SK-N-SH (cell line): ENCODE measurements at regions of chr13 and their contacts with region 1.

Region 1: DNA sequence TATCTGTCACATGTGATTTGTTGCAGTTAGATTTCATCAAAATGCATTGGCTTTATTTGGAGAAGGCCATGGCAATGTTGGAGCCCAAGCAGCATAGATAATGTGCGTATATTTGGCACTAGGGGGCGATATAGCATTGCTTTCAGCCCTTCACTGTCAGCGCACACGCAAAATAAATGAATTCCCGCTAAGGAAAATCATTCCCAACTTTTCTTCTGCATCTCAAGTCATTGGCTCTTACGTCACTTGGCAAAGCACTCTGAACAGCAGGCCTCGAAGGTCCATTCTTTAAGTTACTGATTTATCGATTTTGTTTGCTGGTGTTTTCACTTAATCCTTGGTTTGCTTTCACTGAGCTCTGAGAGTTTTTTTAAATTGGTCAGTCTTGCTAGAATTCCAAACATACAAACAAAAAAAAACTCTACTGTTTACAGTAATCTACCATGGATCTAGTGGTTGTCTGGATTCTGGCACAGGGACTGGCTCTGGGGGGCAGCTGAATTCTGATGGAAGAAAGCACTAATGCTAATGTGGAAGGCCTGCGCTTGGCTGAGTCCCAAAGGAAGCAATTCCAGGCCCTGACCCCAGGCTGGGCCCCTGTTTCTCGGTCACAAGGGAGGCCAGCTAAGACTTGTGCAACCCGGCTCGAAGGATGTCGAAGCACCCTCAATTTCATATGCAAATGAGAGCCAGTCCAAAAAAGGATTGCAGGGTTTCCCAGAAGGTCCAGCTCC is 97.7 kb upstream of the IPO5 start:
- DNase-seq: peak; percentile 62
- H3K4me3 ChIP-seq: no peak overlapping the region
- H3K27ac ChIP-seq: peak overlapping the region in 1 of 2 experiments; percentile 30; a peak in 1 of 4 replicates
- H3K4me1 ChIP-seq: peaks cover 3 to 17% of the 10 kb centered on the region in 2 experiments; a peak in 2 of 4 replicates
- H3K27me3 ChIP-seq: no peaks in the 10 kb centered on the region
- CTCF ChIP-seq: peak; percentile 92
- EP300 ChIP-seq: 0 out of 4 replicates have a peak, but pooled peaks of 1 of the 2 experiments have one; percentile 9
- RAD21 ChIP-seq: peak; percentile 98

Region 2: GRCh38 chr13:97866346-97866745 is 10.6 kb after region 1 on chr13:
- CTCF ChIA-PET with region 1: interaction called, 18 read pairs
- POLR2A ChIA-PET with region 1: no interaction called
- DNase-seq: no peak
- H3K4me3 ChIP-seq: no peak overlapping the region
- H3K27ac ChIP-seq: no peak overlapping the region
- H3K4me1 ChIP-seq: no peaks in the 10 kb centered on the region
- H3K27me3 ChIP-seq: no peaks in the 10 kb centered on the region
- CTCF ChIP-seq: no peak
- EP300 ChIP-seq: no peak
- RAD21 ChIP-seq: no peak

Region 3: GRCh38 chr13:97911311-97912128 is 55.8 kb after region 1 on chr13:
- CTCF ChIA-PET with region 1: interaction called, 14 read pairs
- POLR2A ChIA-PET with region 1: no interaction called
- DNase-seq: peak; percentile 14
- H3K4me3 ChIP-seq: no peak overlapping the region
- H3K27ac ChIP-seq: no peak overlapping the region
- H3K4me1 ChIP-seq: no peaks in the 10 kb centered on the region
- H3K27me3 ChIP-seq: no peaks in the 10 kb centered on the region
- CTCF ChIP-seq: peak; percentile 63
- EP300 ChIP-seq: no peak
- RAD21 ChIP-seq: peak; percentile 49

Region 4: GRCh38 chr13:98429977-98430736 is 574.4 kb after region 1 on chr13:
- CTCF ChIA-PET with region 1: interaction called, 10 read pairs
- POLR2A ChIA-PET with region 1: no interaction called
- DNase-seq: no peak
- H3K4me3 ChIP-seq: no peak overlapping the region
- H3K27ac ChIP-seq: no peak overlapping the region
- H3K4me1 ChIP-seq: no peaks in the 10 kb centered on the region
- H3K27me3 ChIP-seq: no peaks in the 10 kb centered on the region
- CTCF ChIP-seq: no peak
- EP300 ChIP-seq: no peak
- RAD21 ChIP-seq: no peak

Region 5: DNA sequence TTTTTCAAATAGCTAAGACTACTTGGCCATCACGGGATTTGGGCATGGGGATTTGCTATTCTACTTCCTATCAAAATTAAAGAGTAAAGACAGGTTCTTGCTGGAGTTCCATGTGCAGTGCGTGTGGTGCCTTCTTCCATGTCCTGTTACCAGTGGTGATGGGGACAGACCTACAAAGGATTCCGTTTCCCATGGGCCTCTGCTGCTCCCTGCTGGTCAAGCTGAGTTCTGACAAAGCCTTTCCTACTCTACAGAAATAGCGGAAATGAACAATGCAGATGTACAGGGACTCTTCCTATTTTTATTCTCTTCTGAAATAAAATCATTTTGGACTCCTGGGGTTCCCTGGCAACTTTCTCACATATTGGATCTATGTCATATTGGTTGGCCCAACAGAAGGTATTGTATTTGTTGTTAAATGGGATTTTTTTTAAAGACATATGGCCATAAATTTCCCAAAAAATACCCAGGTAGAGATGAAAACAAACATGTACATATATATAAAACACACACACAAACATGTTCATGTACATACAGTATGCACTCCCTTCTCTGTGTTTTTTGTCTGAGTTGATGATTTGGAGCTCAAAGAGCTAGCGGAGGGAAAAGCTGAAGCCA is 987.2 kb after region 1 on chr13:
- CTCF ChIA-PET with region 1: interaction called, 17 read pairs
- POLR2A ChIA-PET with region 1: no interaction called
- DNase-seq: peak; percentile 72
- H3K4me3 ChIP-seq: no peak overlapping the region; a peak in 1 of 4 replicates
- H3K27ac ChIP-seq: no peak overlapping the region
- H3K4me1 ChIP-seq: peaks cover 6 to 7% of the 10 kb centered on the region in 2 experiments; a peak in 2 of 4 replicates
- H3K27me3 ChIP-seq: no peaks in the 10 kb centered on the region
- CTCF ChIP-seq: peak; percentile 91
- EP300 ChIP-seq: no peak
- RAD21 ChIP-seq: peak; percentile 97